ENCODE measurements at regions of chr20 and their contacts with region 1.

Region 1: DNA sequence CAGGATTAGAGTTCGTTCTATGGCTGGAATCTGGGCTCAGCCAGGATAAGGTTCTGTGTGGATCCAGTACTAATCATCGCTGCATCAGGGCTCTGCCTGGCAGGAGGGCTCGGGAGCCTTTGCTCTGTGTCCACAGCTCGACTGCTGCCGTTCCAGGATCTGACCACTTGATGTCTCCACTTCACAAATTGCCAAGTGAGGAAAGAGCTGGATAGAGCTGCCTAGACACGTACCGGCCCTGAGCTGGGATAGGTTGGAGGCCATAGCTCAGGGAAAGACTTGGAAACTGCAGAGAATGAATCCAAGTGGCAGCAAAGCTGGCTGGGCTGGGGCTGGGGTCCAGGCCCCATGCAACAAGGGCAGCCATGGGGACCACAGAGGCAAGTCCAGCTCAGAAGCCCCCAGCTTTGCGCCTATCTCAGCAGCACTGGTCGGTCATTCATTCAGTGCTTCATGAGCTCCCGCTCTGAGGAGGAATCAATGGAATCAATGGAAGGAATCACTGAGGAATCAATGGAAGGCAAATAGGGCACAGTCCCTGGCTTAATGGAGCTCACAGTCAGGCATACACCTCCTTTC is 38.0 kb upstream of the TOP1 start:
- DNase-seq: peak; percentile 20 to 69 (median 42)
- H3K4me3 ChIP-seq: no peak overlapping the region
- H3K4me3 Mint-ChIP-seq: peak overlapping the region in 2 of 7 donors; percentile 9 to 21
- H3K27ac ChIP-seq: peak overlapping the region; percentile 4
- H3K27ac Mint-ChIP-seq: peak overlapping the region in 4 of 8 donors; percentile 25 to 88 (median 68)
- H3K4me1 ChIP-seq: peaks cover 32% of the 10 kb centered on the region
- H3K4me1 Mint-ChIP-seq: peaks cover 35 to 36% (median 35%) of the 10 kb centered on the region in 3 donors
- H3K27me3 ChIP-seq: no peaks in the 10 kb centered on the region
- H3K27me3 Mint-ChIP-seq: no peaks in the 10 kb centered on the region

Region 2: DNA sequence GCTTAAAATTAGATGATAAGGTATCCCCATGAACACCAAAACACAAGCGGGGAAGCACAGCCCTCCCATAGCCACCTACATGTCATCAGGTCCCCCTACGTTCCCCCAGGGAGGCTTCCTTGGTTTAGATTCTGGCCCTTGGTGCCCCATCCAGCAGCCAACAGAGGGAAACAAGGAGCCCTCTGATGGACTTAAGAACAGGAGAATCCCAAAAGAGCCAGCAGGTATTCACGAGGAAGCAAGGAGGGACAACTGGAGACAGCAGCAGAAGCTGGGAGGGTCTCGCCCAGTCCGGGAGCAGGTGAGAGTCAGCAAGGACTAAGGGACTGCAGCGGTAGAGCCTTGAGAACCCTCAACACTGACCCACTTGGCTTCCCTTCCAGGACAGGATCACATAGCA is 20.4 kb before region 1 on chr20:
- CTCF ChIA-PET with region 1: interaction called, 25 read pairs
- POLR2A ChIA-PET with region 1: no interaction called
- DNase-seq: no peak
- H3K4me3 ChIP-seq: no peak overlapping the region
- H3K4me3 Mint-ChIP-seq: no peak overlapping the region
- H3K27ac ChIP-seq: no peak overlapping the region
- H3K27ac Mint-ChIP-seq: no peak overlapping the region
- H3K4me1 ChIP-seq: no peaks in the 10 kb centered on the region
- H3K4me1 Mint-ChIP-seq: peaks cover 7 to 10% (median 9%) of the 10 kb centered on the region in 3 donors
- H3K27me3 ChIP-seq: peaks cover 3% of the 10 kb centered on the region
- H3K27me3 Mint-ChIP-seq: peaks cover 3 to 7% of the 10 kb centered on the region in 2 donors

Region 3: GRCh38 chr20:41029149-41029923 is 38.7 kb after region 1 on chr20:
- CTCF ChIA-PET with region 1: interaction called, 23 read pairs
- POLR2A ChIA-PET with region 1: no interaction called
- DNase-seq: peak; percentile 11 to 55 (median 37)
- H3K4me3 ChIP-seq: peak overlapping the region; percentile 76
- H3K4me3 Mint-ChIP-seq: peak overlapping the region; percentile 87 to 98 (median 96)
- H3K27ac ChIP-seq: peak overlapping the region; percentile 94
- H3K27ac Mint-ChIP-seq: peak overlapping the region; percentile 87 to 99 (median 94)
- H3K4me1 ChIP-seq: peaks cover 52% of the 10 kb centered on the region
- H3K4me1 Mint-ChIP-seq: peaks cover 55 to 62% (median 58%) of the 10 kb centered on the region in 3 donors
- H3K27me3 ChIP-seq: no peaks in the 10 kb centered on the region
- H3K27me3 Mint-ChIP-seq: peaks cover 0 to 1% of the 10 kb centered on the region in 2 donors

Region 4: GRCh38 chr20:41061155-41061554 is 70.5 kb after region 1 on chr20:
- CTCF ChIA-PET with region 1: interaction called, 11 read pairs
- POLR2A ChIA-PET with region 1: no interaction called
- DNase-seq: no peak
- H3K4me3 ChIP-seq: no peak overlapping the region
- H3K4me3 Mint-ChIP-seq: no peak overlapping the region
- H3K27ac ChIP-seq: no peak overlapping the region
- H3K27ac Mint-ChIP-seq: peak overlapping the region in 3 of 8 donors; percentile 34 to 48 (median 41)
- H3K4me1 ChIP-seq: peaks cover 12% of the 10 kb centered on the region
- H3K4me1 Mint-ChIP-seq: peaks cover 55 to 79% (median 78%) of the 10 kb centered on the region in 3 donors
- H3K27me3 ChIP-seq: no peaks in the 10 kb centered on the region
- H3K27me3 Mint-ChIP-seq: no peaks in the 10 kb centered on the region

Region 5: GRCh38 chr20:41095110-41095969 is 104.7 kb after region 1 on chr20:
- CTCF ChIA-PET with region 1: interaction called, 96 read pairs
- POLR2A ChIA-PET with region 1: no interaction called
- DNase-seq: peak; percentile 27 to 76 (median 47)
- H3K4me3 ChIP-seq: no peak overlapping the region
- H3K4me3 Mint-ChIP-seq: no peak overlapping the region
- H3K27ac ChIP-seq: no peak overlapping the region
- H3K27ac Mint-ChIP-seq: peak overlapping the region in 3 of 8 donors; percentile 52 to 83 (median 55)
- H3K4me1 ChIP-seq: no peaks in the 10 kb centered on the region
- H3K4me1 Mint-ChIP-seq: peaks cover 0 to 8% (median 0%) of the 10 kb centered on the region in 3 donors
- H3K27me3 ChIP-seq: no peaks in the 10 kb centered on the region
- H3K27me3 Mint-ChIP-seq: no peaks in the 10 kb centered on the region

Measured in CD8-positive, alpha-beta memory T cell (primary cell).